ENCODE measurements at regions of chr20 and their contacts with region 1.

Region 1: DNA sequence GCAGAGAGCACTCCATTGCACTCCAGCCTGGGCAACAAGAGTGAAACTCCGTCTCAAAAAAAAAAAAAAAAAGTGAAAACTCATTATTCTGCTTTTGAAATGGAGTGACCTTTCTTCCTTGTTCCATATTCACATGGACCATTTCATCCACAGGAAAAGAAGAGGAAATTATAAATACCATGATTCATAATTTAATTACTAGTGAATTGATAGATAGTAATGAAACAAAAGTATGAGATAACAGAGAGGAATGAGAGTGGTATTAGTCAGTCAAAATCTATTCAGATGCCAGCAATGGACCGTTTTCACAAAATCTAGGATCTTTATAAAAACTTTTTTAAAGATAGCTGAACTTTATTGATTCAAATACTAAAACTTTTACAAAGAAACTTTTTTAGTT is 443.1 kb upstream of the FLRT3 start:
- DNase-seq: no peak
- H3K4me3 ChIP-seq: no peak overlapping the region
- H3K27ac ChIP-seq: no peak overlapping the region
- H3K4me1 ChIP-seq: no peaks in the 10 kb centered on the region
- CTCF ChIP-seq: no peak

Region 2: GRCh38 chr20:14732996-14733395 is 47.5 kb before region 1 on chr20:
- CTCF ChIA-PET with region 1: no interaction called
- POLR2A ChIA-PET with region 1: no interaction called
- intact Hi-C with region 1: loop called (anchors 10 kb)
- DNase-seq: no peak
- H3K4me3 ChIP-seq: no peak overlapping the region
- H3K27ac ChIP-seq: no peak overlapping the region
- H3K4me1 ChIP-seq: no peaks in the 10 kb centered on the region
- CTCF ChIP-seq: no peak

Region 3: DNA sequence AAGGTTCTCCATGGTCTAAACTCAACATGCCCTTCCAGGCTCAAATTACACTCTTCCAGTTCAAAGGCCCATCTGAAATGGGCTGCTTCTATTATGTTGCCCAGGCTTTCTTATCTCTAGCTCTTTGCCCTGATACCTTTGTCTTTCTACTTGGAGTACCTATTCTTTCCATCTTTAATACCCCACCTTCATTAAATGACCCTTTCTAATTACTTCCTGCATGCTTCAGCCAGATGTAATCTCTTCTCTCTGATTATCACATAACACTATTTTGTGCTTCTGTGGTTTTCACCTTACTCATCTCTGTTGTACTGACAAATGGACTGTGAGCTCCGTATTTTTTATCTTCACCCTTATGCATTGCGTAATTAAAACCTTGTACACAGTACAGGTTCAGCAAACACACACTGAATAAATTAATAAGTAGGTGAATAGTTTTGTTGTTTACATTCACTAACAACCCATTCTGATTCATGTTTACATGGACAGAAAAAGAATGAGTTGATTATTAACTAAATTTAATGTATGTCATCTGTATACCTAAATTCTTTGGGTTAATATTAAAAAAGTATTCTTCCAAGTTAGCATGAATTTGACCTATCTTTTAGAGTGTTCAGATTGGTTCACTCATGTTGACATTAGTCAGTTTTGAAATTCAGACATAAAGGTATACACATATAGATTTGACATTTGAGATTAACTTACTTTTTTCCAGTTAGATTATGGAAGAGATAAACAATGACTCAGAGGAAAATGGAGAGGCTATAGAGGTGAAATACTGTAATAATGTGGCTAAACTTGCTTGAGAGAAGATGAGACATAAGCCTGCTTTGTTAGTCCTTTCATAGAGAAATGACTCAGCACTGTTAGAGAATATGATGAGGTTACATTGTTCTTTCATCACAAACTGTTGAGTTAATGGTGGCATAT is 98.5 kb after region 1 on chr20:
- CTCF ChIA-PET with region 1: no interaction called
- POLR2A ChIA-PET with region 1: no interaction called
- intact Hi-C with region 1: no loop called
- DNase-seq: no peak
- H3K4me3 ChIP-seq: no peak overlapping the region
- H3K27ac ChIP-seq: no peak overlapping the region
- H3K4me1 ChIP-seq: no peaks in the 10 kb centered on the region
- CTCF ChIP-seq: no peak